ENCODE measurements at regions of chr15 and their contacts with region 1.

Region 1: DNA sequence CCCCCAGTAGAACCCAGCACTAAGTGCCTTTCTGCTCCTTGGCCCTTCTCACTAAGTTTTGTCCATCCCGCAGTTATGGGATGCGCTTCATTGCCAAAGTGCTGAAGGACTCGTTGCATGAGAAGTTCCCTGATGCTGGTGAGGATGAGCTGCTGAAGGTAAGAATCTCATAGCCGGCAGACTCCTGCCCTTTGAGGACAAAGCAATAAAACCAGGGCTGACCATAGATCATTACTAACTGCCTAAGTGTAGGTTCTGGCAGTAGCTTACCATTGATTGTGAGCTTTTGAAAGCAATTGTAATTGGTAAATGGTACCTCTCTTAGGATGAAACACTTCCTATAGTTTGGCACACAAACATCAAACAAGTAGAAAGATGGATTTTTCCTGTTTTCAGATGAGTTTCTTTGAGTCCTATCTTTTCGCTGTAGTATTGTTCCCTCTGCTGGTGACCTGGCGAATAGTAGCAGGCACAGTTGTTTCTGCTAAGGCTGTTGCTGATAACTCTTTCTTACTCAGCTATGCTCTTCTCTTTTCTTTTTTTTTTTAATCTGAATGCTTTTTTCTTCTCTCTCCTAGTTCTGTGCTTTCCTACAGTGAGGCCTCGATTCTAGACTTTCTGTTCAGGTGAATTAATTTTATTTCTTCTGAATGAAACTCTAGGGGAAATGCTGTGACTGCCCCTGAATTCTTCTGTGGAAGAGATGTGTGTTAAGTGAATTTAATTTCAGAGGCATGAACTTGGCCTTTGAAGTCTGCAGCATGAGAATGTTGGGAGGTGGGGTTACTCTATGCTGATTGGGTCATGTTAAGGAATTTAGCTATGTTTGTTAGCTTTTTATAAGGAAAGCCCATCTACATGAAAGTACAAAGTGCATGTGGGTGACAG is 47.4 kb upstream of the CRTC3 start:
- DNase-seq: peak; percentile 78
- H3K4me3 ChIP-seq: no peak overlapping the region
- H3K27ac ChIP-seq: no peak overlapping the region
- H3K4me1 ChIP-seq: peaks cover 11% of the 10 kb centered on the region
- H3K27me3 ChIP-seq: no peaks in the 10 kb centered on the region
- CTCF ChIP-seq: peak; percentile 47 to 67
- POLR2A ChIP-seq: no peak

Region 2: GRCh38 chr15:90291679-90292356 is 190.6 kb before region 1 on chr15:
- CTCF ChIA-PET with region 1: interaction called, 30 read pairs
- POLR2A ChIA-PET with region 1: no interaction called
- dilution Hi-C with region 1: no loop called
- intact Hi-C with region 1: loop called (anchors 1 kb)
- DNase-seq: no peak
- H3K4me3 ChIP-seq: no peak overlapping the region
- H3K27ac ChIP-seq: no peak overlapping the region
- H3K4me1 ChIP-seq: no peaks in the 10 kb centered on the region
- H3K27me3 ChIP-seq: peaks cover 0 to 1% of the 10 kb centered on the region in 2 experiments
- CTCF ChIP-seq: no peak
- POLR2A ChIP-seq: no peak

Region 3: GRCh38 chr15:90325726-90326125 is 156.6 kb before region 1 on chr15:
- CTCF ChIA-PET with region 1: interaction called, 148 read pairs
- POLR2A ChIA-PET with region 1: no interaction called
- dilution Hi-C with region 1: no loop called
- intact Hi-C with region 1: loop called (anchors 1 kb)
- DNase-seq: no peak
- H3K4me3 ChIP-seq: no peak overlapping the region
- H3K27ac ChIP-seq: no peak overlapping the region
- H3K4me1 ChIP-seq: no peaks in the 10 kb centered on the region
- H3K27me3 ChIP-seq: no peaks in the 10 kb centered on the region
- CTCF ChIP-seq: no peak
- POLR2A ChIP-seq: no peak

Measured in endothelial cell of umbilical vein (primary cell).